ENCODE measurements at regions of chrX and their contacts with region 1.

Region 1: DNA sequence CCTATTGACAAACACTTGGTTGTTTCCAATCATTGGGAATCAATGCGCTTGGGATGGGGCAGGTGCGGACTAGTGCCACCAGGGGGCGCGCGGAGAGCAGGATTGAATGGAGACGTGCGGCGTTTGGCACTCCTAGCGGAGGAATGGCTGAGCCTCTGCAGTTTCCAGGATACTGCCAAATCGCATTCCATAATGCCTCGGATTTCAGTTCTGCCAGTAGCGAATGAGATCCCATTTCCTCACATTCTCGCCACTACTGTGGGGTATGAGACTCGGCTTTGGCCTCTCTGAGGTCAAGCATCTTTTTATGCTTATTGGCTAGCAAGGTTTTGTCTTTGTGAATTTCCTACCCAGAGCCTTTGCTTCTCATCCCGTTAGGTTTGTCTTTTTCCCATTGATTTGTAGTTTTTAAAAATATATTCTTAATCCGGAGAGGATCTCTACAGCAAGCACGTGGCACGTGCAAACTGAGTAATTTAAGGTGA is 28.7 kb downstream of the CLDN34 start:
- DNase-seq: peak; percentile 91

Region 2: DNA sequence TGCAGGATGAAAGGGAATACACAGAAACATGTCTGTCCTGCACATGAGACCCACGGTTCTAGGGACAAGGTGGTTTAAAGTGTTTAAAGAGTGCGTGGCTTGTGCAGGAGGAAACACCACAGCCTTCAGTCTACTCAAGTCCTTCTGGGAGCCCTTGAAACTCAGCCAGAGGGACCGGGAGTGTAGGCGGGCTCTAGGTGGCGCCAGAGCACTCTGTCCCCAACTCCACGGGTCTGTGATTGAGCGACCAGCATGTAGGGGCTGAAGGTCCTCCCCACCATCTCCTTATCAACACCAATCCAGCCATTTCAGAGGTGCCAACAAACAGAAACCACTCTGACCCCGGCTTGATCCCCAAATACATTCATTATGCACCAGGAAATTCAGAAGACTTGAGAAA is 110.7 kb before region 1 on chrX:
- intact Hi-C with region 1: loop called (anchors 5 kb)
- DNase-seq: peak; percentile 83

Measured in cardiac septum (tissue), 1 donor.